ENCODE measurements at regions of chr2 and their contacts with region 1.

Region 1: GRCh38 chr2:28507806-28508764 is 12.2 kb downstream of the PLB1 start:
- DNase-seq: peak; percentile 84 to 95
- H3K4me3 ChIP-seq: no peak overlapping the region
- H3K4me3 Mint-ChIP-seq: peak overlapping the region; percentile 1
- H3K27ac Mint-ChIP-seq: peak overlapping the region; percentile 72
- H3K4me1 ChIP-seq: peaks cover 30% of the 10 kb centered on the region
- H3K4me1 Mint-ChIP-seq: peaks cover 14% of the 10 kb centered on the region
- H3K27me3 ChIP-seq: no peaks in the 10 kb centered on the region
- H3K27me3 Mint-ChIP-seq: no peaks in the 10 kb centered on the region
- CTCF ChIP-seq: no peak

Region 2: GRCh38 chr2:28413142-28413898 is 94.8 kb before region 1 on chr2:
- CTCF ChIA-PET with region 1: no interaction called
- POLR2A ChIA-PET with region 1: no interaction called
- intact Hi-C with region 1: no loop called
- DNase-seq: peak in 1 of 2 experiments; percentile 47
- H3K4me3 ChIP-seq: no peak overlapping the region
- H3K4me3 Mint-ChIP-seq: no peak overlapping the region
- H3K27ac Mint-ChIP-seq: peak overlapping the region; percentile 39
- H3K4me1 ChIP-seq: 0 out of 2 replicates have a peak, but pooled peaks cover 3% of the 10 kb centered on the region
- H3K4me1 Mint-ChIP-seq: no peaks in the 10 kb centered on the region
- H3K27me3 ChIP-seq: no peaks in the 10 kb centered on the region
- H3K27me3 Mint-ChIP-seq: no peaks in the 10 kb centered on the region
- CTCF ChIP-seq: no peak

Region 3: DNA sequence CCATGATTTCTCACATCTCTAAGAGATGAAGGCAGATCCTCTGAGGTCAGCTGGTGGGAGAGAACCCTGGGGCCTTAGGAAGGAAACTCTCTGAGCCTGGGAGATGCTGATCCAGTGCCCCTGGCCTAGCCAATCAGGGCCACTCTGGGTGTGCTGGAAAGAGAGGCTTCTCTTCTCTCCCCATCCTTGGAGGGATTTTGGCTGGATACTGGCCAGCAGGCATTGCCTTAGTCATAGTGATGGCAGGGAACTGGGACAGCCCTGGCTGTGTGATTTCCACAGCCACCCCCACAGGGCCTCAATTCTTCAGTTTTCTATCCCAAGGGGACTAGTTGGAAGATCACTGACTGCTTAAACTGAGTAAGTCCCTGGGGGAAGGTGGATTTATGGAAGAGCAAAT is 38.8 kb before region 1 on chr2:
- CTCF ChIA-PET with region 1: no interaction called
- POLR2A ChIA-PET with region 1: no interaction called
- intact Hi-C with region 1: loop called (anchors 2 kb)
- DNase-seq: no peak
- H3K4me3 ChIP-seq: no peak overlapping the region
- H3K4me3 Mint-ChIP-seq: no peak overlapping the region
- H3K27ac Mint-ChIP-seq: no peak overlapping the region
- H3K4me1 ChIP-seq: peaks cover 27% of the 10 kb centered on the region
- H3K4me1 Mint-ChIP-seq: peaks cover 23% of the 10 kb centered on the region
- H3K27me3 ChIP-seq: no peaks in the 10 kb centered on the region
- H3K27me3 Mint-ChIP-seq: no peaks in the 10 kb centered on the region
- CTCF ChIP-seq: no peak

Measured in Caco-2 (cell line).